H1 (cell line): ENCODE measurements at regions of chr4 and their contacts with region 1.

Region 1: GRCh38 chr4:108596344-108596743 is 24.0 kb upstream of the RPL34 start:
- DNase-seq: no peak
- H3K4me3 ChIP-seq: no peak overlapping the region
- H3K27ac ChIP-seq: no peak overlapping the region
- H3K4me1 ChIP-seq: no peaks in the 10 kb centered on the region; a peak in 1 of 7 replicates
- H3K27me3 ChIP-seq: peaks cover 0 to 2% (median 1%) of the 10 kb centered on the region in 4 experiments; a peak in 4 of 7 replicates
- CTCF ChIP-seq: no peak
- EP300 ChIP-seq: no peak
- POLR2A ChIP-seq: no peak
- RAD21 ChIP-seq: no peak

Region 2: GRCh38 chr4:108620101-108620932 is 24.0 kb after region 1 on chr4 and contains the start of gene RPL34:
- CTCF ChIA-PET with region 1: interaction called, 4 read pairs
- POLR2A ChIA-PET with region 1: interaction called, 16 read pairs
- DNase-seq: peak; percentile 77 to 88
- H3K4me3 ChIP-seq: peak within 1 kb of the TSS; percentile 72 to 100 (median 96)
- H3K27ac ChIP-seq: peak within 1 kb of the TSS; percentile 92
- H3K4me1 ChIP-seq: peaks cover 0 to 6% (median 3%) of the 10 kb centered on the region in 4 experiments; a peak in 3 of 7 replicates
- H3K27me3 ChIP-seq: no peaks in the 10 kb centered on the region
- CTCF ChIP-seq: no peak
- EP300 ChIP-seq: no peak
- POLR2A ChIP-seq: peak; percentile 92 to 99
- RAD21 ChIP-seq: no peak
- total RNA-seq, gene RPL34: 1,419 and 1,430 TPM in 2 replicates